K562 (cell line): ENCODE measurements at regions of chr12 and their contacts with region 1.

Region 1: GRCh38 chr12:69254046-69254445 is 14.7 kb downstream of the CPSF6 start:
- DNase-seq: peak; percentile 27 to 62 (median 32)
- ATAC-seq: peak; percentile 77
- H3K4me3 ChIP-seq: no peak overlapping the region
- H3K27ac ChIP-seq: no peak overlapping the region
- H3K4me1 ChIP-seq: no peaks in the 10 kb centered on the region
- H3K27me3 ChIP-seq: no peaks in the 10 kb centered on the region
- CTCF ChIP-seq: peak; percentile 40 to 78 (median 56); a peak in 5 of 6 replicates
- EP300 ChIP-seq: no peak
- POLR2A ChIP-seq: 0 out of 2 replicates have a peak, but pooled peaks have one; percentile 28
- RAD21 ChIP-seq: peak; percentile 72 to 74

Region 2: DNA sequence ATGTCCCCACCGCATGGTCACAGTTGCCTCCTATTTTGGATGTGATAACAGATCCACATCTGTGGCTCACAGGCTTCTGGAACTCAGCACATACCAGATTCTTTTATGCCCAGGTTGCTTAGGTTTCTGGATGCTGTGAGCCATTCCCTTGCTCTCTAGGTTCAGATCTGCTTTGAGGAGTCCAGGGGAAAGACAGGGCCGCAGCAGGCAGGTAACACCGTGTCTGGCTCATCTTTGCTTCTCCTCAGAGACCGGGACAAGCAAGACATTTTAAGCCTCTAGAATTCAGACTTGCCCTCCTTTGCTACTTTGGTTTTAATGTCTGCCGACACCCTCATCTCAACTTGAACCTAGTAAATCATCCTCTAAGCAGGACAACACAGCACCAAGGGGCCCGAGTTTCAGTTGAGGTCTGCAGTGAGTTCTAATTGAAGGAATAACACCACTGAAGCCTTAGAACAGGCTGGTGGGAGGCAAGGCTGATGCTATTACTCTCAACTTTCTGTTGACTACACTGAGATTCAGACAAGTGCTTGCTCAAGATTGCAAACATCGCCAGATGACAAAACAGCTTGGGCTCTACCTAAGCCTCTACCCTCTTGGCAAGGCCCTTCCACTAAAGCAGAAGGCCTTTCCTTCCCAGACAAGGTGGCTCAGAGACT is 390.8 kb before region 1 on chr12:
- CTCF ChIA-PET with region 1: no interaction called
- POLR2A ChIA-PET with region 1: no interaction called
- in situ Hi-C with region 1: no loop called
- intact Hi-C with region 1: loop called (anchors 5 kb)
- DNase-seq: no peak
- ATAC-seq: no peak
- H3K4me3 ChIP-seq: no peak overlapping the region
- H3K27ac ChIP-seq: no peak overlapping the region; the same call in 2 of the 3 replicates
- H3K4me1 ChIP-seq: no peaks in the 10 kb centered on the region; a peak in 1 of 5 replicates
- H3K27me3 ChIP-seq: peaks cover 10 to 20% of the 10 kb centered on the region in 2 experiments; a peak in 4 of 5 replicates
- CTCF ChIP-seq: no peak
- EP300 ChIP-seq: no peak
- POLR2A ChIP-seq: no peak
- RAD21 ChIP-seq: no peak

Region 3: GRCh38 chr12:68932961-68933893 is 320.8 kb before region 1 on chr12 and contains the start of gene CPM:
- CTCF ChIA-PET with region 1: no interaction called
- POLR2A ChIA-PET with region 1: no interaction called
- in situ Hi-C with region 1: no loop called
- intact Hi-C with region 1: no loop called
- DNase-seq: peak; percentile 58 to 88 (median 83)
- ATAC-seq: peak; percentile 100
- H3K4me3 ChIP-seq: peak within 1 kb of the TSS; percentile 33
- H3K27ac ChIP-seq: no peak within 1 kb of the TSS
- H3K4me1 ChIP-seq: peaks cover 0 to 11% of the 10 kb centered on the region in 2 experiments; a peak in 2 of 5 replicates
- H3K27me3 ChIP-seq: peaks cover 9 to 24% of the 10 kb centered on the region in 2 experiments; a peak in 3 of 5 replicates
- CTCF ChIP-seq: no peak
- EP300 ChIP-seq: no peak
- POLR2A ChIP-seq: no peak
- RAD21 ChIP-seq: no peak
- polyA plus RNA-seq, gene CPM: not detected

Region 4: GRCh38 chr12:69123919-69124638 is 130.0 kb before region 1 on chr12:
- CTCF ChIA-PET with region 1: no interaction called
- POLR2A ChIA-PET with region 1: no interaction called
- in situ Hi-C with region 1: no loop called
- intact Hi-C with region 1: no loop called
- DNase-seq: no peak
- ATAC-seq: no peak
- H3K4me3 ChIP-seq: no peak overlapping the region
- H3K27ac ChIP-seq: no peak overlapping the region
- H3K4me1 ChIP-seq: no peaks in the 10 kb centered on the region
- H3K27me3 ChIP-seq: peaks cover 18 to 24% of the 10 kb centered on the region in 2 experiments
- CTCF ChIP-seq: no peak
- EP300 ChIP-seq: no peak
- POLR2A ChIP-seq: no peak
- RAD21 ChIP-seq: no peak

Region 5: GRCh38 chr12:69243099-69244084 is 10.7 kb before region 1 on chr12:
- CTCF ChIA-PET with region 1: interaction called, 4 read pairs
- POLR2A ChIA-PET with region 1: interaction called, 15 read pairs
- in situ Hi-C with region 1: no loop called
- intact Hi-C with region 1: no loop called
- DNase-seq: peak in 1 of 4 experiments; percentile 65
- ATAC-seq: peak; percentile 60
- H3K4me3 ChIP-seq: peak overlapping the region; percentile 14; the same call in 1 of the 2 replicates
- H3K27ac ChIP-seq: peak overlapping the region; percentile 30; the same call in 2 of the 3 replicates
- H3K4me1 ChIP-seq: peaks cover 6 to 34% of the 10 kb centered on the region in 2 experiments; a peak in 3 of 5 replicates
- H3K27me3 ChIP-seq: no peaks in the 10 kb centered on the region
- CTCF ChIP-seq: no peak
- EP300 ChIP-seq: no peak
- POLR2A ChIP-seq: no peak
- RAD21 ChIP-seq: no peak